GM12878 (cell line): ENCODE measurements at regions of chr2 and their contacts with region 1.

Region 1: DNA sequence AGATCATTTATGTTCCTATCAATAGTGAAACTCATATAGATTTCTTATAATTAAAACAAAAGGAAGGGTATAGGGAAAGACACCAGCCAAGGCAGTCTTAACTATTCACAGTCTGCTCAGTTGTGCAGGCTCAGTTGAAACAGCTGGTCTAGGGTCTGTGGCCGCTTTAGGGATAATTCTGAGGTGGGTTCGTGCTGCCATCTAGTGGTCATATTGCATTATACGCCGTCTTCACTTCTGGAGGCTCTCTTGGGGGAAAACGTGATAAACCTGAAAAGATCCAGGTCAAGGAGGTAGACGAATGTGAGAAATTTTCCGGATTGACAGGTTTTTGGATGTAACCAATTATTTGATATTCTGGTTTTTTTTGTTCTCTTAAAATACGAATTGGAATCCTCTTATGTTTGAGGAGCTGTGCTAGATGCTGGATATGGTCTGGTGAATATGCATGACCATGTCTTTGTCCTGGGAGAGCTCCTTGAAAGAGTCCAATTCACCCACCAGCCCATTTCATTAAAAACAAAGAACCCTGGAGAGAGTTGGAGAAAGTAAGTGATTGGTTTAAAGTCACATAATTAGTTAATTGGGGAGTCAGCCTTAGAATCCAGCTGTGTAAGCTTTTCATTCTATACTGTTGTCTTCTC is 492.4 kb downstream of the PLCL1 start:
- DNase-seq: no peak
- ATAC-seq: peak; percentile 96
- H3K4me3 ChIP-seq: no peak overlapping the region
- H3K27ac ChIP-seq: no peak overlapping the region
- H3K4me1 ChIP-seq: no peaks in the 10 kb centered on the region
- H3K27me3 ChIP-seq: peaks cover 0 to 2% of the 10 kb centered on the region in 2 experiments; a peak in 3 of 4 replicates
- CTCF ChIP-seq: peak; percentile 58 to 77 (median 65)
- EP300 ChIP-seq: no peak
- POLR2A ChIP-seq: no peak
- RAD21 ChIP-seq: peak; percentile 84

Region 2: DNA sequence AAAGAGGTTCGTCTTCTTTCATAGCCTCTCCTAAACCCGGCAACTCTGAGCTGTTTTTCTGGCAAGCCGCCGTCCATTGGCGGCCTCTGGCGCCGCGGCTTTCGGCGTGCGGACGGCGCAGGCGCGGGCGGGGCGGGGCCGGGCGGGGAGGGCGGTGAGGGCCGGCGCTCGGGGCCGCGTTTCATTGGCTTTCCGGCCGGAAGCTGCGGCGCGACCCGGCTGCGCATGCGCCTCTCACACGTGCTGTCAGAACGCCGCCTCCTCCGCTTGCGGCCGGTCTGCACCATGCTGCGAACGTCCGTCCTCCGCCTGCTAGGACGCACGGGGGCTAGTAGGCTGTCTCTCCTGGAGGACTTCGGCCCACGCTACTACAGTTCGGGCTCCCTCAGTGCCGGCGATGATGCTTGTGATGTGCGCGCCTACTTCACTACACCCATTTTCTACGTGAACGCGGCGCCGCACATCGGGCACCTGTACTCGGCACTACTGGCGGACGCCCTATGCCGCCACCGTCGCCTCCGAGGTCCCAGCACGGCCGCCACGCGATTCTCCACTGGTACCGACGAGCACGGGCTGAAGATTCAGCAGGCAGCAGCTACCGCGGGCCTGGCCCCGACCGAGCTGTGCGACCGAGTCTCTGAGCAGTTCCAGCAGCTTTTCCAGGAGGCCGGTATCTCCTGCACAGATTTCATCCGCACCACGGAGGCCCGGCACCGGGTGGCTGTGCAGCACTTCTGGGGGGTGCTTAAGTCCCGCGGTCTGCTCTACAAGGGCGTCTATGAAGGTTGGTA is 591.5 kb before region 1 on chr2 and contains the start of gene MARS2:
- CTCF ChIA-PET with region 1: interaction called, 13 read pairs
- POLR2A ChIA-PET with region 1: no interaction called
- RAD21 ChIA-PET with region 1: no interaction called
- SMC1A ChIA-PET with region 1: interaction called, 5 read pairs
- in situ Hi-C with region 1: no loop called
- intact Hi-C with region 1: loop called (anchors 10 kb)
- DNase-seq: peak; percentile 68
- ATAC-seq: peak; percentile 86
- H3K4me3 ChIP-seq: peak within 1 kb of the TSS; percentile 81
- H3K27ac ChIP-seq: peak within 1 kb of the TSS; percentile 61
- H3K4me1 ChIP-seq: peaks cover 5% of the 10 kb centered on the region
- H3K27me3 ChIP-seq: no peaks in the 10 kb centered on the region
- CTCF ChIP-seq: 0 out of 6 replicates have a peak, but pooled peaks of 1 of the 3 experiments have one; percentile 4
- EP300 ChIP-seq: 0 out of 4 replicates have a peak, but pooled peaks of 1 of the 2 experiments have one; percentile 19
- POLR2A ChIP-seq: peak; percentile 98
- RAD21 ChIP-seq: no peak
- polyA plus RNA-seq, gene MARS2: 4.0 to 6.9 TPM

Region 3: DNA sequence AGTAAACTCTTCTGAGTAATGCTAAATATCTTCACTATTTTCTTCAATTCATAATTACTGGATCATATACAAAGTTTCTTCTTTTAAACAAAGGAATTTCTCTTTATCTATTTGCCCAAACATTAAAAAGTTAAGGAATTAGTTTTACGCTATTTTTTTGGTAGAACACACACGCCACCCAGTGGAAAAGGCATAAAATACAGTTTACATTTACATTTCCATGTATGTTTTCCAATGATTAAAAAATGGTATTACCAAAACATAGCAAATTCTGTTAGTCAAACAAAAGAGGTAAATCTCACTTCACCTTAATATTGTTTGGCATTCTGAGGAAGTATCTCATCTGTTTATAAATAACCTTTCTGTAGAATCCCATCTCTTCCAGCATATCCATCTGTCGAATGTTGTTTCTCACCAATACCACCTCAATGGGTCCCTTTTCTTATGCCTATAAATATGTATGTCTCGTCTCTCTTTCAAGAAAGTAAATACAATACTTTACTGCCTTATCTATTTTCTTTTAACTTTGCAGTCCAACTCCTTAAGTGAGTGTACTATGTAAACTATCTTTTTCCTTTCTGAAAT is 518.9 kb before region 1 on chr2:
- CTCF ChIA-PET with region 1: interaction called, 14 read pairs
- POLR2A ChIA-PET with region 1: interaction called, 5 read pairs
- RAD21 ChIA-PET with region 1: interaction called, 9 read pairs
- SMC1A ChIA-PET with region 1: interaction called, 13 read pairs
- in situ Hi-C with region 1: no loop called
- intact Hi-C with region 1: no loop called
- DNase-seq: peak; percentile 12
- ATAC-seq: no peak
- H3K4me3 ChIP-seq: no peak overlapping the region
- H3K27ac ChIP-seq: no peak overlapping the region
- H3K4me1 ChIP-seq: no peaks in the 10 kb centered on the region
- H3K27me3 ChIP-seq: no peaks in the 10 kb centered on the region
- CTCF ChIP-seq: peak; percentile 47 to 69 (median 50); a peak in 4 of 6 replicates
- EP300 ChIP-seq: no peak
- POLR2A ChIP-seq: no peak
- RAD21 ChIP-seq: peak; percentile 85

Region 4: DNA sequence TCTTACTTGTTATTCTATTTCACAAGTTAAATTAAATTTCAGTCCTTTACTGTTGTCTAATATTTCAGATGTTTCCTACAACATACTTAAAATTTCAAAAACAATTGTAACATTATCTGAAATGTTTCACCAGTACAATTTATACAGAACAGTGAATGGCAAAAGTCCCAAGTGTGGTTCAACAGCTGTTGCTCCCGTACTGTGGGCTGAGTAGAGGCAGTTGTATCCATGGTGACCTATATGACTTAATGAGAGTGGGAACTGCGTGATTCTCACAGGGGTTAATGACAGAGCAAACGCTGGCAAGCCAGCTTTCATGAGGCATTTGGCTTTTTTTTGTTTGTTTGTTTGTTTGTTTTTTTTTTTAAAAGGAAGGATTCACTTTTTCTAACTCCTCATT is 497.7 kb before region 1 on chr2:
- CTCF ChIA-PET with region 1: interaction called, 35 read pairs
- POLR2A ChIA-PET with region 1: no interaction called
- RAD21 ChIA-PET with region 1: interaction called, 14 read pairs
- SMC1A ChIA-PET with region 1: interaction called, 37 read pairs
- in situ Hi-C with region 1: loop called (anchors 5 kb)
- intact Hi-C with region 1: loop called (anchors 1 kb)
- DNase-seq: no peak
- ATAC-seq: peak; percentile 49
- H3K4me3 ChIP-seq: no peak overlapping the region
- H3K27ac ChIP-seq: no peak overlapping the region
- H3K4me1 ChIP-seq: no peaks in the 10 kb centered on the region
- H3K27me3 ChIP-seq: peaks cover 0 to 2% of the 10 kb centered on the region in 2 experiments; a peak in 2 of 4 replicates
- CTCF ChIP-seq: no peak
- EP300 ChIP-seq: no peak
- POLR2A ChIP-seq: no peak
- RAD21 ChIP-seq: no peak

Region 5: DNA sequence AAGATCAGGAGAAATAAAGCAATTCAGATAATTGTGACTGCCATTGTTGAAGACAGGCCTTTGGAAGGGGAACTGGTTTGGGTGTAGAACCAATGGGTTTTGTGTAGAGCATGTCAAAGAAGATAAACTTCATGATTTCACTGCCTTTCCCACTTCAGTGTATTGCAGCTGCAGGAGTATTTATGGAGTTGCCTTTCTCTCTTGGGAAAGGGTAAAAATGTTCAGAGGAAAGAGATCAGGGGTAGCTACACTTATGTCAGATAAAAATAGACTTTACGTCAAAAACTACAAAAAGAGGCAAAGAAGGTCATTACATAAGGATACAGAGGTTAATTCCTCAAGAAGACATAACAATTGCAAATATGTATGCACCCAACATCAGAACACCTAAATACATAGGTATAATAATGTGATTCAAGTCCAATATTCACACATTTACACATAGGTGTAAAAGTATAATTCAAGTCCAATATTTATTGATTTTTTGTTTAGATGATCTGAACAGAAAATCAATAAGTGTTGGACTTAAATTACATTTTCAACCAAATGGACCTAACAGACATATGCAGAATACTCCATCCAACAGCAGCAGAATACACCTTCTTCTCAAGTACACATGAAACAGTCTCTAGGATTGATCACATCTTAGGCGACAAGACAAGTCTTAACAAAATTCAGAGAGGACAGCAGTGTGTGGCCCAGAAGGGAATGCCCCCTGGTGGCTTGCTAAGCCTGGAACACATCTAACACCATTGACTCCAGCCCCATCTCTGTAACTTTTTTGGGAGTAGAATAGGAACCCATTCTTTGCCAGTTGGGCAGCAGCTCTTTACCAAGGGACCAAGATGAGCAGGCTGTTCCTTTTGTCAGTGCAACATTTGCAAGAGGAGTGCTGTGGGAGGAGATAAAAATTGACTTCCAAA is 242.8 kb before region 1 on chr2:
- CTCF ChIA-PET with region 1: interaction called, 3 read pairs
- POLR2A ChIA-PET with region 1: no interaction called
- RAD21 ChIA-PET with region 1: interaction called, 3 read pairs
- SMC1A ChIA-PET with region 1: no interaction called
- in situ Hi-C with region 1: no loop called
- intact Hi-C with region 1: loop called (anchors 10 kb)
- DNase-seq: no peak
- ATAC-seq: peak; percentile 97
- H3K4me3 ChIP-seq: no peak overlapping the region
- H3K27ac ChIP-seq: no peak overlapping the region
- H3K4me1 ChIP-seq: no peaks in the 10 kb centered on the region
- H3K27me3 ChIP-seq: no peaks in the 10 kb centered on the region
- CTCF ChIP-seq: peak; percentile 47 to 65 (median 59)
- EP300 ChIP-seq: no peak
- POLR2A ChIP-seq: no peak
- RAD21 ChIP-seq: peak; percentile 80

Region 6: GRCh38 chr2:198259496-198259895 is 37.3 kb before region 1 on chr2:
- CTCF ChIA-PET with region 1: interaction called, 14 read pairs
- POLR2A ChIA-PET with region 1: no interaction called
- RAD21 ChIA-PET with region 1: no interaction called
- SMC1A ChIA-PET with region 1: interaction called, 11 read pairs
- in situ Hi-C with region 1: no loop called
- intact Hi-C with region 1: no loop called
- DNase-seq: no peak
- ATAC-seq: no peak
- H3K4me3 ChIP-seq: no peak overlapping the region
- H3K27ac ChIP-seq: no peak overlapping the region
- H3K4me1 ChIP-seq: no peaks in the 10 kb centered on the region
- H3K27me3 ChIP-seq: peaks cover 0 to 4% of the 10 kb centered on the region in 2 experiments; a peak in 2 of 4 replicates
- CTCF ChIP-seq: no peak
- EP300 ChIP-seq: no peak
- POLR2A ChIP-seq: no peak
- RAD21 ChIP-seq: no peak

Region 7: GRCh38 chr2:198316852-198317396 is 20.1 kb after region 1 on chr2:
- CTCF ChIA-PET with region 1: interaction called, 11 read pairs
- POLR2A ChIA-PET with region 1: no interaction called
- RAD21 ChIA-PET with region 1: interaction called, 3 read pairs
- SMC1A ChIA-PET with region 1: interaction called, 3 read pairs
- in situ Hi-C with region 1: no loop called
- intact Hi-C with region 1: no loop called
- DNase-seq: no peak
- ATAC-seq: no peak
- H3K4me3 ChIP-seq: no peak overlapping the region
- H3K27ac ChIP-seq: no peak overlapping the region
- H3K4me1 ChIP-seq: no peaks in the 10 kb centered on the region
- H3K27me3 ChIP-seq: no peaks in the 10 kb centered on the region; a peak in 1 of 4 replicates
- CTCF ChIP-seq: no peak
- EP300 ChIP-seq: no peak
- POLR2A ChIP-seq: no peak
- RAD21 ChIP-seq: no peak

Region 8: GRCh38 chr2:198697218-198697617 is 400.4 kb after region 1 on chr2:
- CTCF ChIA-PET with region 1: no interaction called
- POLR2A ChIA-PET with region 1: no interaction called
- RAD21 ChIA-PET with region 1: no interaction called
- SMC1A ChIA-PET with region 1: no interaction called
- in situ Hi-C with region 1: no loop called
- intact Hi-C with region 1: no loop called
- DNase-seq: no peak
- ATAC-seq: no peak
- H3K4me3 ChIP-seq: no peak overlapping the region
- H3K27ac ChIP-seq: no peak overlapping the region
- H3K4me1 ChIP-seq: no peaks in the 10 kb centered on the region
- H3K27me3 ChIP-seq: no peaks in the 10 kb centered on the region
- CTCF ChIP-seq: no peak
- EP300 ChIP-seq: no peak
- POLR2A ChIP-seq: no peak
- RAD21 ChIP-seq: no peak